CD4-positive, alpha-beta memory T cell (primary cell): ENCODE measurements at regions of chr10 and their contacts with region 1.

Region 1: GRCh38 chr10:92848441-92849233 is at the start of gene EXOC6:
- DNase-seq: peak; percentile 88 to 93 (median 91)
- H3K4me3 ChIP-seq: peak within 1 kb of the TSS; percentile 60 to 76
- H3K4me3 Mint-ChIP-seq: peak within 1 kb of the TSS; percentile 85 to 96 (median 93)
- H3K27ac ChIP-seq: peak within 1 kb of the TSS; percentile 67
- H3K27ac Mint-ChIP-seq: peak within 1 kb of the TSS; percentile 86 to 95 (median 93)
- H3K4me1 ChIP-seq: peaks cover 19% of the 10 kb centered on the region
- H3K4me1 Mint-ChIP-seq: peaks cover 10 to 38% (median 24%) of the 10 kb centered on the region in 4 donors
- H3K27me3 ChIP-seq: no peaks in the 10 kb centered on the region
- H3K27me3 Mint-ChIP-seq: no peaks in the 10 kb centered on the region
- total RNA-seq, gene EXOC6: 10.5 to 11.4 TPM

Region 2: DNA sequence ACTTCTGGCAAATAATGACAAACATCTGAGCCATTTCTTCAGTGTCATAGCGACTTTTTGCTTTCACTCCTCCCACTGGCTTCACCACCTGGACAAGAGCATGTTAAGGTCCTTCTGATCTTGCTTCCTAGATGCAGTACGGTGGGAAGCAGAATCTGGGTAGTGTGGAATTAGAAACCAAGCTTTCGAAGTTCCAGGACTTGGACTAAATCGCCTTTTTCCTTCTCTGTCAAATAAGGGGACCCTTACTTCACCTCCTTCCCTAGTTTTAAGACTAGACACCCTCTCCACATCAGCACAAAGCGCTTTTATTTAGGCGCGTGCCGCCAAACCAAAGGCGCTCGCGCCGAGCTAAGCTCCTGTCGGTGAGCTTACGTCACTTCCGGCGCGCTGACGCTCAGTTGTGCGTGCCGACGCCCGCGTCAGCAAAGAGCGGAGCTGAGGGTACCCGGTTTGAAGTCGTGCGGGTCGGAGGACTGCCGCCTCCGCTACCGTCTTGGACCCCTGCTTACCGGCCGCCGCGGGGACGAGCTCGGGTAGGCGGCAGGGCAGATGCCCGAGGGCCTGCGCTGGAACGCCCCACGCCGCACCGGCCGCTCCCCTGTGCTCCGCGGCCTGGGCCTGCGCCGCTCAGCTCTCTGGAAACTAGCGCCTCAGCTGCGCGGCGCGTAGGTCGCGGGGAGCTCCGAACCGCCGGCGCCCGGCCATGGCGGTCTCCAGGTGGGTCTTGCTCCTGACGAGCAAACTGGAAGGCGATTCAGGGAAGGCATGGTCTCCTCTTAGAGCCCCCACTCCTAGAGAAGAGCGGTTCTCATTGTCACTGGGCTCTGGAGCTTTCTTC is 925.0 kb before region 1 on chr10 and contains the start of gene BTAF1:
- CTCF ChIA-PET with region 1: no interaction called
- POLR2A ChIA-PET with region 1: interaction called, 3 read pairs
- intact Hi-C with region 1: loop called (anchors 2 kb)
- DNase-seq: peak; percentile 89 to 93 (median 92)
- H3K4me3 ChIP-seq: peak within 1 kb of the TSS; percentile 79 to 87
- H3K4me3 Mint-ChIP-seq: peak within 1 kb of the TSS; percentile 90 to 99 (median 94)
- H3K27ac ChIP-seq: peak within 1 kb of the TSS; percentile 91
- H3K27ac Mint-ChIP-seq: peak within 1 kb of the TSS; percentile 96 to 100 (median 99)
- H3K4me1 ChIP-seq: peaks cover 50% of the 10 kb centered on the region
- H3K4me1 Mint-ChIP-seq: peaks cover 29 to 50% (median 38%) of the 10 kb centered on the region in 4 donors
- H3K27me3 ChIP-seq: no peaks in the 10 kb centered on the region
- H3K27me3 Mint-ChIP-seq: peaks cover 2% of the 10 kb centered on the region in 2 donors
- total RNA-seq, gene BTAF1: 69.1 to 76.9 TPM

Region 3: GRCh38 chr10:92328999-92329398 is 519.6 kb before region 1 on chr10:
- CTCF ChIA-PET with region 1: no interaction called
- POLR2A ChIA-PET with region 1: no interaction called
- intact Hi-C with region 1: no loop called
- DNase-seq: no peak
- H3K4me3 ChIP-seq: no peak overlapping the region
- H3K4me3 Mint-ChIP-seq: no peak overlapping the region
- H3K27ac ChIP-seq: no peak overlapping the region
- H3K27ac Mint-ChIP-seq: no peak overlapping the region
- H3K4me1 ChIP-seq: no peaks in the 10 kb centered on the region
- H3K4me1 Mint-ChIP-seq: peaks cover 19 to 42% (median 23%) of the 10 kb centered on the region in 4 donors
- H3K27me3 ChIP-seq: no peaks in the 10 kb centered on the region
- H3K27me3 Mint-ChIP-seq: no peaks in the 10 kb centered on the region

Region 4: GRCh38 chr10:92689663-92690210 is 158.9 kb before region 1 on chr10 and contains the start of gene HHEX:
- CTCF ChIA-PET with region 1: interaction called, 3 read pairs
- POLR2A ChIA-PET with region 1: interaction called, 5 read pairs
- intact Hi-C with region 1: loop called (anchors 10 kb)
- DNase-seq: peak in 2 of 5 donors; percentile 15 to 29
- H3K4me3 ChIP-seq: peak within 1 kb of the TSS; percentile 43 to 47
- H3K4me3 Mint-ChIP-seq: peak within 1 kb of the TSS; percentile 77 to 91 (median 86)
- H3K27ac ChIP-seq: no peak within 1 kb of the TSS
- H3K27ac Mint-ChIP-seq: peak within 1 kb of the TSS in 4 of 7 donors; percentile 13 to 84 (median 56)
- H3K4me1 ChIP-seq: peaks cover 25% of the 10 kb centered on the region
- H3K4me1 Mint-ChIP-seq: peaks cover 9 to 33% (median 26%) of the 10 kb centered on the region in 4 donors
- H3K27me3 ChIP-seq: peaks cover 37% of the 10 kb centered on the region
- H3K27me3 Mint-ChIP-seq: peaks cover 29 to 42% of the 10 kb centered on the region in 2 donors
- total RNA-seq, gene HHEX: 0.32 TPM in 1 of 2 experiments, not detected in the other

Region 5: DNA sequence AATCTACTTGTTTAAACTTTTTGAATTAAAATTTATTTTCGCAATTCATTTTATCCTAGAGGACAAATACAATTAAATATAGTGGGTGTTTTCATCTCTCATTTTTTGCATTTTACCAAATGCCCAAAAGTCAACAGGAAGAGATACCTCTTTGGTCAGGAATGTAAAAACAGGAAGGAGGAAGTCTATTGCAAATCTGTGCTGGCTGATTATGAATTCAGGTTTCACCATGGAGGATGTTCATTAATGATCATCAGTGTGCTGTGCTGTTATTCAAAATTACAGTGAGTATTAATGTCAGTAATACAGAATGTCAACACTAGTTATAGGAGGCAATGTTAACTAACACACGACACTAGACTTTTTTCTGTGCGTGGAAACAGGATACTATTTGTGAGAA is 24.4 kb after region 1 on chr10:
- CTCF ChIA-PET with region 1: interaction called, 103 read pairs
- POLR2A ChIA-PET with region 1: interaction called, 17 read pairs
- intact Hi-C with region 1: no loop called
- DNase-seq: no peak
- H3K4me3 ChIP-seq: no peak overlapping the region
- H3K4me3 Mint-ChIP-seq: peak overlapping the region in 4 of 8 donors; percentile 18 to 46 (median 27)
- H3K27ac ChIP-seq: no peak overlapping the region
- H3K27ac Mint-ChIP-seq: peak overlapping the region in 3 of 7 donors; percentile 4 to 69 (median 62)
- H3K4me1 ChIP-seq: peaks cover 30% of the 10 kb centered on the region
- H3K4me1 Mint-ChIP-seq: peaks cover 28 to 49% (median 41%) of the 10 kb centered on the region in 4 donors
- H3K27me3 ChIP-seq: no peaks in the 10 kb centered on the region
- H3K27me3 Mint-ChIP-seq: no peaks in the 10 kb centered on the region

Region 6: GRCh38 chr10:92923416-92923815 is 74.8 kb after region 1 on chr10:
- CTCF ChIA-PET with region 1: no interaction called
- POLR2A ChIA-PET with region 1: no interaction called
- intact Hi-C with region 1: no loop called
- DNase-seq: no peak
- H3K4me3 ChIP-seq: no peak overlapping the region
- H3K4me3 Mint-ChIP-seq: no peak overlapping the region
- H3K27ac ChIP-seq: no peak overlapping the region
- H3K27ac Mint-ChIP-seq: no peak overlapping the region
- H3K4me1 ChIP-seq: no peaks in the 10 kb centered on the region
- H3K4me1 Mint-ChIP-seq: no peaks in the 10 kb centered on the region
- H3K27me3 ChIP-seq: no peaks in the 10 kb centered on the region
- H3K27me3 Mint-ChIP-seq: no peaks in the 10 kb centered on the region

Region 7: DNA sequence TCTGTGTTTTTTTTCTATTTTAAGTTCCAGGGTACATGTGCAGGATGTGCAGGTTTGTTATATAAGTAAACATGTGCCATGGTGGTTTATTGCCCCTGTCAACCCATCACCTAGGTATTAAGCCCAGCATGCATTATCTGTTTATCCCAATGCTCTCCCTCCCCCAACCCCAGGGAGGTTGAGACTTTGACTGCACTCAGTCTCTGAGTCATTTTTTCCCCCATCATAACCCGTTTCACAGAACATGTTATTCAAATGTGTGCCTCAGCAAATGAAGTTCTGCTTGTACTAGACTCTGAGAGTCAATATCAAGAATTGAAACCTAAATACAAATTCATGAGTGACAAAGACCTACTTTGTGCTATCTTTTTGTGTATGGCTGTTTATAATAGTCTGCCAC is 142.0 kb after region 1 on chr10:
- CTCF ChIA-PET with region 1: no interaction called
- POLR2A ChIA-PET with region 1: no interaction called
- intact Hi-C with region 1: no loop called
- DNase-seq: no peak
- H3K4me3 ChIP-seq: no peak overlapping the region
- H3K4me3 Mint-ChIP-seq: no peak overlapping the region
- H3K27ac ChIP-seq: no peak overlapping the region
- H3K27ac Mint-ChIP-seq: no peak overlapping the region
- H3K4me1 ChIP-seq: no peaks in the 10 kb centered on the region
- H3K4me1 Mint-ChIP-seq: peaks cover 0 to 11% (median 6%) of the 10 kb centered on the region in 4 donors
- H3K27me3 ChIP-seq: no peaks in the 10 kb centered on the region
- H3K27me3 Mint-ChIP-seq: no peaks in the 10 kb centered on the region

Region 8: DNA sequence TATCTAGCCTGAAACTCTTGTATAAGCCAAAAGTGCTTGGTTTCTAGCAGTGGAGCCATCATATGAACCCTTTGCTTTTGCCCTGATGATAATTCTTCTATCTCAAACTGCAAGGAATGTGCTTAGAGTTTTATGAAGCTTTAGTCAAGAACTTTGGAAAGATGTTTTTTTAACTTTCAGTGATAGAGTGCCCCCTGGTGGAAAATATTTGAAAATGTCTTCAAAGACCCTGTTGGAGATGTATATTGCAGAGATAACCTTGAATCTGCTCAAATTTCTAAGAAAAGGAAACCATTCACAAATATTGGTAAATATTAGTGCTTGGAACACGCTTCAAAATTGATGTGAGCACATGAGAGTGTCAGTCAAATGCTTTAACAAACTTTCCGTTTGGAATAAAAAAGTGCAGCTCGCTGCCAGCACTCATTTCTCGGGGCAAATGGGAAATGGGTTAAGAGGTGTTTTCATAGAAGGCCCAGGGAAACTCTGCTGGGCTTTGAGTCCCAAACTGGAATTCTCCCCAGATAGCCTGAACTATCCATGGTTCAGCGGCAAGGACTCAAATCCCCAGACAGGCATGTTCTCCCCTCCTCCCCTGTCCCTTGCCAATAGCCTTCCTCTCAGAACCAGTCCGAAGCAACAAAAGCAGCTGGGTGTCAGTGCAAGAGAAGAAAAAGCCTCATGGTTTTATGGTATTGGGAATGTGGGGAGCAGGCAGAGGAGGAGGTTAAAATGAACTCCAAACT is 504.2 kb after region 1 on chr10:
- CTCF ChIA-PET with region 1: interaction called, 11 read pairs
- POLR2A ChIA-PET with region 1: no interaction called
- intact Hi-C with region 1: loop called (anchors 1 kb)
- DNase-seq: peak in 4 of 5 donors; percentile 43 to 46 (median 45)
- H3K4me3 ChIP-seq: no peak overlapping the region
- H3K4me3 Mint-ChIP-seq: no peak overlapping the region
- H3K27ac ChIP-seq: no peak overlapping the region
- H3K27ac Mint-ChIP-seq: no peak overlapping the region
- H3K4me1 ChIP-seq: no peaks in the 10 kb centered on the region
- H3K4me1 Mint-ChIP-seq: peaks cover 0 to 3% (median 0%) of the 10 kb centered on the region in 4 donors
- H3K27me3 ChIP-seq: no peaks in the 10 kb centered on the region
- H3K27me3 Mint-ChIP-seq: peaks cover 7 to 10% of the 10 kb centered on the region in 2 donors

Region 9: DNA sequence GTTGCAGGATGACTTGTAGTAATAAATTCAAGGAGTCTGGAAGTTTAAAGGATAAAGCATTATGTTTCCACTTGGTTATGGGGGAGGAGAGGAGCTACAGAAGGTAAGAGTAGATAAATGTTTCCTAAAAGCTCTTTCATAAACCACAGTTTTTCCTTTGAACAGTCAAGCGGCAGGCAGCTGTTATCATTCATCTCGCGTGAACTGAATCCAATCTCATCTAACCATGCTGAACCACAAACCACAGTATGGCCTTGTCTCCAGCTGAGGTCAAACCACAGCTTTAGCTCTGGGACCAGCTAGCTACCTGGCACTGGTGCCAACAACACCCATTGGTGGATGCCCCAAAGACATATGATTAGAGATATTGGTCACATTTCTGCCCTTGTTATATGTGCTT is 1450.8 kb after region 1 on chr10:
- CTCF ChIA-PET with region 1: no interaction called
- POLR2A ChIA-PET with region 1: no interaction called
- intact Hi-C with region 1: no loop called
- DNase-seq: peak; percentile 9 to 51 (median 28)
- H3K4me3 ChIP-seq: no peak overlapping the region
- H3K4me3 Mint-ChIP-seq: peak overlapping the region in 2 of 8 donors; percentile 25 to 27
- H3K27ac ChIP-seq: no peak overlapping the region
- H3K27ac Mint-ChIP-seq: no peak overlapping the region
- H3K4me1 ChIP-seq: peaks cover 17% of the 10 kb centered on the region
- H3K4me1 Mint-ChIP-seq: peaks cover 12 to 23% (median 17%) of the 10 kb centered on the region in 4 donors
- H3K27me3 ChIP-seq: no peaks in the 10 kb centered on the region
- H3K27me3 Mint-ChIP-seq: peaks cover 24 to 33% of the 10 kb centered on the region in 2 donors

Region 10: DNA sequence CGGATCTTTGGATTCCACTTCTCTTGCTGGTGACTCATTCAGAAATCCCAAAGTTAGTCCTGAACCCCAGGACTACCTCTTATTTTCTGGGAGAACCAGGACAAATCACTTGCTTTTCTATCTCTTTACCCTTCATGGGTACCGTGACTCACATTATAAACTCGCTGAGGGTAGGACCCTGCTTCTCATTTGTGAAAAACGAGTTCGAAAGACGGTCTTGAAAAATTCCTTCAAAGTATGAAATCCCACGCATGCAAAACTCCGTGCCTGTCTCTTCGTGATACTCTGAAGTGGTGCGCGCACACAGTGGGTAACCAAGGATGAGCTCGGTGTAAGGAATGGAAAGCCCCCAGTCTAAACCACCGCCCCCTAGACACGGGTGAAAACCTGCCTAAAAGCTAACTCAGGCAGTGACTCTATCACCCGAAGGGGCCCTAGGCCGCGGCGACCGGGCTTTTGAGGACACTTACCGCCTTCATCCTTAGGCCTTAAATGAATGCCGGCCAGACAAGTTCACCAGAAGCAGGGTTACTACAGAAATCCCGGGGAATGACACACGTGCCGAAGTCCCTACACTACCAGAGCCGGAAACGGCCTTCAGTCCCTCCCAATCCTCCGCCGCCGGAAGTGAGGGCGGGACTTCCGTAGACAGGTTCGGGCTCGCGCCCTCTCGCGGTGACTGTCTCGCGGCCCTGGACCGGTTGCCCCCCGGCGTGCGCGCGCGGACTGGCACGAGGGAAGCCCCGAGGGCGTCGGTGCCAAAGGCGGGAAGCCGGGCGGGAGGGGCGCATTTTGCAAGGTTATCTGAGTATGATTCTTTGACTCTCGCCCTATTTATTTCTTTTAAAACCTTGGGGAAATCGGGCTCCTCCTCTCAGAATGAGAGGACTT is 1514.0 kb after region 1 on chr10 and contains the start of gene NOC3L:
- CTCF ChIA-PET with region 1: no interaction called
- POLR2A ChIA-PET with region 1: no interaction called
- intact Hi-C with region 1: loop called (anchors 10 kb)
- DNase-seq: peak; percentile 91 to 93 (median 92)
- H3K4me3 ChIP-seq: peak within 1 kb of the TSS; percentile 64 to 82
- H3K4me3 Mint-ChIP-seq: peak within 1 kb of the TSS; percentile 94 to 97 (median 96)
- H3K27ac ChIP-seq: peak within 1 kb of the TSS; percentile 86
- H3K27ac Mint-ChIP-seq: peak within 1 kb of the TSS; percentile 93 to 99 (median 97)
- H3K4me1 ChIP-seq: peaks cover 26% of the 10 kb centered on the region
- H3K4me1 Mint-ChIP-seq: peaks cover 25 to 43% (median 34%) of the 10 kb centered on the region in 4 donors
- H3K27me3 ChIP-seq: no peaks in the 10 kb centered on the region
- H3K27me3 Mint-ChIP-seq: peaks cover 5 to 9% of the 10 kb centered on the region in 2 donors
- total RNA-seq, gene NOC3L: 21.8 to 22.5 TPM